GM13977 (cell line): ENCODE measurements at regions of chr15 and their contacts with region 1.

Region 1: DNA sequence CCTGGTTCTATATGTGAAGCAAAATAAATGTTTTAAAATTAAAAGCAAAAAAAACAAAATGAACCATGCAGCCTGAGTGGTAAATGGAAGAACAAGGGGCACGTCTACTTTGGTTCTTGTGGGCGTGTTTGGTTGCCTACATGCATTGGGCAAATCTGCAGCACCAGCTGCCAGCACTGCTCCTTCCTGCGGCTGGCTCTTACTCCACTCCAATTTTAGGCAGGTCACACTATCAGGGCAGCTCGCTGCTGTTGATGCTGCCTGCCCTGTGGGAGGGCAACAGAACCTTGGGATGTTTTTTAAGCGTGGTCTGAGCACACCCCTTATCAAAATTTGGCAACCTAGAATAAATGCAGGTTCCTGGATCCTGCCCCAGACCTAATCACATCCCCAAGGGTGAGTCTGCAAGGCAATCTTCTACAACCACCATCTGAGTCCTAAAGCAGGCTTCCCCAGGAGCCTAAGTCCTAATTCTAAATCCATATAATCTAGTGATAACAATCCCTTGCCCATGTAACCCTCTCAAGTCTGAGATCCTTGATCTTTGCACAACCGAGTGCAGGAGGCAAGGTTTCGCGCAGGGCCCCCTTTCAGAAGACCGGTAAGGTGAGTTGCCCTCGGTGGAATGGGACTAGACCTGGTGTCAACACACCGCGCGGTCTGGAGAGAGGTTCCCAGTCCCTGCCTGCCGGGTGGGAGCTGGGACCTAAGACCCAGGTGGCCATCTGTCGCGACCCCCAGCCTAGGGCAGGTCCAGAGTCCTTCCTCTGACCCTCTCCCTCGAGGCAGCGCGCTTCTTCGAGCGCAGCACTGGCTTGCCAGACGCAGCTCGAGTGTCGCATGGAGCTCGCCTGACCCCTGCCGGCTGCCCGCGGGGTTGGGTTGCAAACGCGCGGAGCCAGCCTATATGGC is 15.9 kb downstream of the IVD start:
- DNase-seq: peak; percentile 87
- CTCF ChIP-seq: peak; percentile 99

Region 2: GRCh38 chr15:39860200-39860599 is 561.3 kb before region 1 on chr15:
- in situ Hi-C with region 1: no loop called
- DNase-seq: no peak
- CTCF ChIP-seq: no peak

Region 3: GRCh38 chr15:40338041-40338657 is 83.4 kb before region 1 on chr15:
- in situ Hi-C with region 1: loop called (anchors 5 kb)
- DNase-seq: peak; percentile 95
- CTCF ChIP-seq: peak; percentile 89